WTC11 (cell line): ENCODE measurements at regions of chr9 and their contacts with region 1.

Region 1: DNA sequence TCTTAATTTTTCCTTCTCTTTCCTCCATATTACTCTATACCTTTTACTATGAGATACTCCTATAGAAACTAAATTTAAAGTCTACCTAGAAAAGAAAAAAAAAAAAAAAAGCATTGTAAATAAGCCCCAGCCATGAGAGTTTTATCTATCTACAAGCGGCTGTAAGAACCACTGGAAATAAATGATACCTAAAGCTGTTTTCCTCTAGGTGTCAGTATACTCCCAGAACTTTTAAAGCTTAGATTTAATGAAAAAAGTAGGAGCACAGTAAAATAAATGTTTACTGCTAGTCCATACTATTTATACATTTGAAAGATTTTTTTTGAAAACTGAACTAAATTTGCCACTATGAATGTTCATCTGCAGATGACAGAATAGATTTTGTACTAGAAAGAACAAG is 26.2 kb downstream of the TYRP1 start:
- DNase-seq: no peak
- ATAC-seq: no peak
- H3K4me3 Mint-ChIP-seq: peak overlapping the region; percentile 21; the same call in 1 of the 2 replicates
- H3K27ac Mint-ChIP-seq: no peak overlapping the region
- H3K4me1 Mint-ChIP-seq: peaks cover 15% of the 10 kb centered on the region
- H3K27me3 Mint-ChIP-seq: no peaks in the 10 kb centered on the region
- CTCF ChIP-seq: no peak

Region 2: GRCh38 chr9:12702160-12702758 is 17.2 kb before region 1 on chr9:
- CTCF ChIA-PET with region 1: interaction called, 24 read pairs
- POLR2A ChIA-PET with region 1: no interaction called
- DNase-seq: peak; percentile 44
- ATAC-seq: peak; percentile 94
- H3K4me3 Mint-ChIP-seq: no peak overlapping the region
- H3K27ac Mint-ChIP-seq: no peak overlapping the region
- H3K4me1 Mint-ChIP-seq: peaks cover 6% of the 10 kb centered on the region
- H3K27me3 Mint-ChIP-seq: no peaks in the 10 kb centered on the region
- CTCF ChIP-seq: peak; percentile 21; the same call in 1 of the 2 replicates

Region 3: DNA sequence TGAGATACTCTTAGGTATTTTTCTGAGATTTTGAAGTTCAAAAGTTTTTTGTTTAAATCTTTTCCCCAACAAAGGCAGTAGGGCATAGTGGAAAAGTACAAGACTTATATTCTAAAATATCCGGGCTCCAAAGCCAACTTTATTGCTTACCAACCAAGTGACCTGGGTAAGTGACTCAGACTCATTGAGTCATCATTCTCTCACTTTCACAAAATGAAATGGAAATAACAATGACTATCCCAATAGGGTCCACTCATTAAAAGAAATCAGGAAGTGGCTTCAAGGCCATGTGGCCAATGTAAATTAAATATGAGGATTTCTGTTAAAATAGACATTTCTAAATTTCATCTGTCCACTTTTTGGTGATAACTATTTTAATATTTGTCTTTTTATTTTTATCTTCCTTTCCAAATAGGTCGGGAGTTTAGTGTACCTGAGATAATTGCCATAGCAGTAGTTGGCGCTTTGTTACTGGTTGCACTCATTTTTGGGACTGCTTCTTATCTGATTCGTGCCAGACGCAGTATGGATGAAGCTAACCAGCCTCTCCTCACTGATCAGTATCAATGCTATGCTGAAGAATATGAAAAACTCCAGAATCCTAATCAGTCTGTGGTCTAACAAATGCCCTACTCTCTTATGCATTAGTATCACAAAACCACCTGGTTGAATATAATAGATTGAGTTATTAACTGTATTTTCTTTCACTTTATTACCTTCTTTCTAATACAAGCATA is 10.7 kb before region 1 on chr9:
- CTCF ChIA-PET with region 1: interaction called, 17 read pairs
- POLR2A ChIA-PET with region 1: no interaction called
- DNase-seq: no peak
- ATAC-seq: no peak
- H3K4me3 Mint-ChIP-seq: no peak overlapping the region
- H3K27ac Mint-ChIP-seq: no peak overlapping the region
- H3K4me1 Mint-ChIP-seq: no peaks in the 10 kb centered on the region
- H3K27me3 Mint-ChIP-seq: no peaks in the 10 kb centered on the region
- CTCF ChIP-seq: no peak

Region 4: DNA sequence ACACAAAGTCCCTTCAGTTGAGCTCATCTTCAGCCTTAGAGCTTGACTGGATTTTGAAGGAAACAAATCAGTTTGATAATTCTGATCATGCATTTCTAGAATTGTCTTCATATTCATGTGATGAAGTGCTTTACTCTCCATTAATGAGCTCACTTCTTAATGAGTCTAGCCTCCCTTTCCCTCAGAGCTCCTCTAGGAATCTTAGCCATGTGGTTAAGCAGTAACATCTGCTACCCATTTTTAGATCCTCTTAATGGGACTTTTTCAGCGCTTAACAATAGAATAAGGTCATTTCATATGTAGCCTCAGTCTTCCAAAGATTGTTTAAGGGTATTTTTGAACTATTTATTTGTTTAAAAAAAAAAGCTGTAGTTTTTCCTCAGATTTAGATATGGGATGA is 18.4 kb after region 1 on chr9:
- CTCF ChIA-PET with region 1: interaction called, 10 read pairs
- POLR2A ChIA-PET with region 1: no interaction called
- DNase-seq: no peak
- ATAC-seq: no peak
- H3K4me3 Mint-ChIP-seq: no peak overlapping the region
- H3K27ac Mint-ChIP-seq: no peak overlapping the region
- H3K4me1 Mint-ChIP-seq: peaks cover 12% of the 10 kb centered on the region; the same call in 1 of the 2 replicates
- H3K27me3 Mint-ChIP-seq: no peaks in the 10 kb centered on the region; the same call in 1 of the 2 replicates
- CTCF ChIP-seq: no peak

Region 5: GRCh38 chr9:12775679-12776512 is 56.5 kb after region 1 on chr9:
- CTCF ChIA-PET with region 1: interaction called, 50 read pairs
- POLR2A ChIA-PET with region 1: no interaction called
- DNase-seq: peak; percentile 44
- ATAC-seq: peak; percentile 90
- H3K4me3 Mint-ChIP-seq: peak overlapping the region; percentile 89
- H3K27ac Mint-ChIP-seq: no peak overlapping the region
- H3K4me1 Mint-ChIP-seq: peaks cover 8% of the 10 kb centered on the region; the same call in 1 of the 2 replicates
- H3K27me3 Mint-ChIP-seq: peaks cover 17% of the 10 kb centered on the region
- CTCF ChIP-seq: no peak

Region 6: GRCh38 chr9:12884737-12885414 is 165.4 kb after region 1 on chr9:
- CTCF ChIA-PET with region 1: interaction called, 20 read pairs
- POLR2A ChIA-PET with region 1: no interaction called
- DNase-seq: no peak
- ATAC-seq: peak; percentile 71
- H3K4me3 Mint-ChIP-seq: no peak overlapping the region
- H3K27ac Mint-ChIP-seq: no peak overlapping the region
- H3K4me1 Mint-ChIP-seq: peaks cover 4% of the 10 kb centered on the region; the same call in 1 of the 2 replicates
- H3K27me3 Mint-ChIP-seq: no peaks in the 10 kb centered on the region
- CTCF ChIP-seq: no peak